ENCODE measurements at regions of chr17 and their contacts with region 1.

Region 1: GRCh38 chr17:50482516-50482915 is 3.9 kb downstream of the RSAD1 start:
- DNase-seq: peak; percentile 95 to 98 (median 97)
- H3K4me3 ChIP-seq: no peak overlapping the region
- H3K27ac ChIP-seq: peak overlapping the region in 1 of 2 donors; percentile 51
- H3K4me1 ChIP-seq: peaks cover 8% of the 10 kb centered on the region
- H3K27me3 ChIP-seq: no peaks in the 10 kb centered on the region
- CTCF ChIP-seq: peak; percentile 78 to 95 (median 94)
- EP300 ChIP-seq: peak; percentile 80
- POLR2A ChIP-seq: no peak

Region 2: GRCh38 chr17:50534222-50534978 is 51.9 kb after region 1 on chr17:
- intact Hi-C with region 1: loop called in 2 of 4 experiments (anchors 10 kb)
- DNase-seq: peak in 1 of 5 donors; percentile 62
- H3K4me3 ChIP-seq: no peak overlapping the region
- H3K27ac ChIP-seq: peak overlapping the region; percentile 7 to 23
- H3K4me1 ChIP-seq: peaks cover 9% of the 10 kb centered on the region
- H3K27me3 ChIP-seq: no peaks in the 10 kb centered on the region
- CTCF ChIP-seq: peak in 2 of 3 donors; percentile 28 to 50
- EP300 ChIP-seq: no peak
- POLR2A ChIP-seq: no peak

Region 3: DNA sequence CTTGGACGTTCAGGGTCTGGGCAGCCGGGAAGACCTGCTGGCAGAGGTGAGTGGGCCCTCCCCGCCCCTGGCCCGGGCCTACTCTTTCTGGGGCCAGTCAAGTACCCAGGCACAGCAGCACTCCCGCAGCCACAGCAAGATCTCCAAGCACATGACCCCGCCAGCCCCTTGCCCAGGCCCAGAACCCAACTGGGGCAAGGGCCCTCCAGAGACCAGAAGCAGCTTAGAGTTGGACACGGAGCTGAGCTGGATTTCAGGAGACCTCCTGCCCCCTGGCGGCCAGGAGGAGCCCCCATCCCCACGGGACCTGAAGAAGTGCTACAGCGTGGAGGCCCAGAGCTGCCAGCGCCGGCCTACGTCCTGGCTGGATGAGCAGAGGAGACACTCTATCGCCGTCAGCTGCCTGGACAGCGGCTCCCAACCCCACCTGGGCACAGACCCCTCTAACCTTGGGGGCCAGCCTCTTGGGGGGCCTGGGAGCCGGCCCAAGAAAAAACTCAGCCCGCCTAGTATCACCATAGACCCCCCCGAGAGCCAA is 143.6 kb after region 1 on chr17:
- intact Hi-C with region 1: loop called in 3 of 4 experiments (anchors 2 to 10 kb)
- DNase-seq: peak; percentile 74 to 88 (median 83)
- H3K4me3 ChIP-seq: no peak overlapping the region
- H3K27ac ChIP-seq: no peak overlapping the region
- H3K4me1 ChIP-seq: peaks cover 3% of the 10 kb centered on the region
- H3K27me3 ChIP-seq: no peaks in the 10 kb centered on the region
- CTCF ChIP-seq: peak; percentile 75 to 81 (median 77)
- EP300 ChIP-seq: no peak
- POLR2A ChIP-seq: no peak

Region 4: DNA sequence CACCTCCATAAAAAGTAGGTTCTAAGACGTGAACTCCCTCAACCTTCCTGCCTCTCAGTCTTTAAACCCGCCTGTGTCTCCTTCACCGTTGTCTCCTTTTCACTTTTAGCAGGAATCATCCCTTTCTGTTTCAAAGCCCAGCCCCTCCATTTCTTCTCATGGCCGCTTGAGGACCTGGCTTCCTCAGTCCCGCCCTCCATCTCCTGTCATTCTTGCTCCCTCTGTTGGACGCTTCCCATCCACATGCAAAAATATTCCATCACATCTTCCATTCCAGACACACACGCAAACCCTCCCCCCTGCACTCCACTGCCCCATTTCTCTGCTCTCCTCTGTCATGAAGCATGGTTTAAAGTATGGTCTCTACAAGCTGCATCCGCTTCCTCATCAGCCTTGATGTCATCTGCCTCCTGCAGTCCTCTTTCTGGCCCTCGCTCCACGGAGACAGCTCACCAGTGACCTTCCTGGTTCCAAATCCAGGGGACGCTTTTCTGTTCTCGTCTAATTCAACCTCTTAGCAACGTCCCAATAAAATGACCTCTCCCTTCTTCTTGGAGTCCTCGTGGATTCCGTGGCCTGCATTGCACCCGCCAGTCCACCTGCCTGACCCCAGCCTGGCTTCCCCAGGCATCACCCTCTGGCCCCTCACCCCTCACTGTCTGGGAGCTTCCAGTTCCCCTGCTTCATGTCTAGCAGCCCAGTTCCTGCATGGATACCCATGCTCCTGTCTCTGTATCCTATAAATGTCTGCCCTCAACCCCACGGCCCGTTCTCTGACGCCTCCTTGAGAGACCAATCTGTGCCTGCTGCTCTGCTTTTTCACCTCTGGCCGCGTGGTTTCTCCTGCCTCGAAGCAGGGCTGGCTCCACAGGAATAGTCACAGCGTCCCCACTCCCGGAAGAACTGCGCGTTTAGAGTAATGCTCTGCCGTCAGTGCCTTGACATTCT is 199.0 kb after region 1 on chr17:
- intact Hi-C with region 1: loop called in 3 of 4 experiments (anchors 5 to 10 kb)
- DNase-seq: peak in 2 of 5 donors; percentile 59 to 71
- H3K4me3 ChIP-seq: no peak overlapping the region
- H3K27ac ChIP-seq: no peak overlapping the region
- H3K4me1 ChIP-seq: peaks cover 9% of the 10 kb centered on the region
- H3K27me3 ChIP-seq: no peaks in the 10 kb centered on the region
- CTCF ChIP-seq: peak in 2 of 3 donors; percentile 63 to 64
- EP300 ChIP-seq: no peak
- POLR2A ChIP-seq: no peak

Region 5: GRCh38 chr17:50686494-50687199 is 204.1 kb after region 1 on chr17:
- intact Hi-C with region 1: loop called (anchors 5 to 10 kb)
- DNase-seq: peak; percentile 83 to 94 (median 87)
- H3K4me3 ChIP-seq: no peak overlapping the region
- H3K27ac ChIP-seq: peak overlapping the region; percentile 53 to 85
- H3K4me1 ChIP-seq: peaks cover 25% of the 10 kb centered on the region
- H3K27me3 ChIP-seq: no peaks in the 10 kb centered on the region
- CTCF ChIP-seq: no peak
- EP300 ChIP-seq: peak; percentile 69
- POLR2A ChIP-seq: no peak

Region 6: GRCh38 chr17:50841949-50842354 is 359.4 kb after region 1 on chr17:
- intact Hi-C with region 1: loop called in 1 of 4 experiments (anchors 10 kb)
- DNase-seq: peak; percentile 68 to 89 (median 84)
- H3K4me3 ChIP-seq: no peak overlapping the region
- H3K27ac ChIP-seq: peak overlapping the region; percentile 5 to 45
- H3K4me1 ChIP-seq: no peaks in the 10 kb centered on the region
- H3K27me3 ChIP-seq: no peaks in the 10 kb centered on the region
- CTCF ChIP-seq: peak; percentile 60 to 85 (median 80)
- EP300 ChIP-seq: no peak
- POLR2A ChIP-seq: no peak

Measured in ovary (tissue), 10 donors.